ENCODE measurements at regions of chr9 and their contacts with region 1.

Region 1: DNA sequence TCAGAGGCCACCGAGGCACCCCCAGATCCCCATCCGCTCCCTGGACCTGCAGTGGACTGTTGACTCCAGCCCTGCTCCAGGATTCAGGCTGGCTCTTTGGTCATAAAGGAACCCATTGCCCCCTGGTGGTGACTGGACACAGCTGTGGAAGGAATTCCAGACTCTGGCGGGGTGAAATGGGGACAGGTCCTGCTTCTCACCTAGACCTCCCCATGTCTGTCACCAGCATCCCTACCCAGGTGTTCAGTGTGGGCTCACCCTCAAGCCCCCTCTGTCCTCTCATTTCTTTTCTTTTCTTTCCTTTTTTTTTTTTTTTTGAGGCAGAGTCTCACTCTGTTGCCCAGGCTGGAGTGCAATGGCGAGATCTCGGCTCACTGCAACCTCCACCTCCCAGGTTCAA is 25.5 kb upstream of the STXBP1 start:
- DNase-seq: peak; percentile 87 to 91 (median 90)
- ATAC-seq: peak; percentile 88
- H3K4me3 ChIP-seq: no peak overlapping the region
- H3K27ac ChIP-seq: no peak overlapping the region
- H3K4me1 ChIP-seq: peaks cover 8% of the 10 kb centered on the region
- H3K27me3 ChIP-seq: no peaks in the 10 kb centered on the region
- CTCF ChIP-seq: peak; percentile 62 to 96 (median 93)
- POLR2A ChIP-seq: peak in 1 of 3 donors; percentile 12

Region 2: GRCh38 chr9:127505481-127506173 is 80.9 kb before region 1 on chr9:
- intact Hi-C with region 1: loop called (anchors 5 kb)
- DNase-seq: no peak
- ATAC-seq: no peak
- H3K4me3 ChIP-seq: no peak overlapping the region
- H3K27ac ChIP-seq: peak overlapping the region in 2 of 4 donors; percentile 12 to 26
- H3K4me1 ChIP-seq: no peaks in the 10 kb centered on the region
- H3K27me3 ChIP-seq: no peaks in the 10 kb centered on the region
- CTCF ChIP-seq: peak in 6 of 7 experiments; percentile 10 to 32 (median 24)
- POLR2A ChIP-seq: no peak

Region 3: GRCh38 chr9:127525401-127526187 is 60.9 kb before region 1 on chr9:
- intact Hi-C with region 1: loop called (anchors 5 kb)
- DNase-seq: peak in 2 of 4 donors; percentile 30 to 53
- ATAC-seq: no peak
- H3K4me3 ChIP-seq: no peak overlapping the region
- H3K27ac ChIP-seq: peak overlapping the region in 1 of 4 donors; percentile 30
- H3K4me1 ChIP-seq: peaks cover 34% of the 10 kb centered on the region
- H3K27me3 ChIP-seq: no peaks in the 10 kb centered on the region
- CTCF ChIP-seq: peak; percentile 26 to 67 (median 53)
- POLR2A ChIP-seq: no peak

Region 4: DNA sequence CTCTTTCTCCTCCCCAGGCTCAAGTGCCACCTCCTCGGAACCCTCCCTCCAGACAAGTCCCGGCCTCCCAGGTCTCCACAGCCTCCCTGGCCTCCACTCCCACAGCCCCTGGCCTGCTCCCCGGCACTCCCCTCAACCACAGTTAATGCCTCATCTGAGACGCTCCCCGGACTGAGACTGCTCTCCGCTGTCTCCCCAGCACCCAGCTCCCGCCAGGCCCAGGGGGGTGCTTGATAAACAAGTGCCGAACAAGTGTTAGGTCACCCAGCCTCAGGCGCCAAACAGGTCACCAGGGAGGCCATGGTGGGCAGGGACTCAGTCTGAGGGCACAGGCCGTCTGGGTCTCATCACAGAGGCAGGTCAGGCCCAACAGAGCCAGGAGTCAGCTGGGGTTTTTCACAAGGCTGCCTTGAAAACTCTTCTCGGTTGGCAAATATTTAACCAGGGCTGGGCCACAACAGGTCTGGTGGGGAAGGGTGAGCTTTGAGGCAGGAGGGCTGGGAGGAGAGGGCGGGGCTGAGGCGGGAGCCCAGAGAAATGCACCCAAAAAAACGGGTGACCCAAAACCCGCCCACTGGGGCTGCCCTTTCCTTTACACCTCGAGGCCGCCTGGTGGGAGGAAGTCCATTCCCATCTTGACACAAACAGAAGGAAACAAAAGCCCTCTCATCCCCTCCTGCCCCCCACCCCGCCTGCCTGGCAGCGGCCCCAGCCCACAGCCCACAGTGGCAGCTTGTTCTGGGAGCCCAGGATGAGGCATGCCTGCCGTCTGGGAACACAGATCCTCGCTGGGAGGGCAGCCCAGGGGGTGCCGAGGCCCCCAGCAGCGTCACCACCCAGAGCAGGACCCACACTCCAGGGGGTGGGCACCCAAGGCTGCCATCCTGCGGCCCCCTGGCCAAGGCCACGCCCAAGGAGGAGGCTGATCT is 41.1 kb before region 1 on chr9:
- intact Hi-C with region 1: loop called (anchors 5 kb)
- DNase-seq: peak; percentile 97 to 99 (median 98)
- ATAC-seq: peak; percentile 87
- H3K4me3 ChIP-seq: no peak overlapping the region
- H3K27ac ChIP-seq: peak overlapping the region; percentile 90 to 99 (median 95)
- H3K4me1 ChIP-seq: peaks cover 97% of the 10 kb centered on the region
- H3K27me3 ChIP-seq: no peaks in the 10 kb centered on the region
- CTCF ChIP-seq: peak in 4 of 7 experiments; percentile 38 to 51 (median 44)
- POLR2A ChIP-seq: peak; percentile 46 to 82 (median 74)

Region 5: DNA sequence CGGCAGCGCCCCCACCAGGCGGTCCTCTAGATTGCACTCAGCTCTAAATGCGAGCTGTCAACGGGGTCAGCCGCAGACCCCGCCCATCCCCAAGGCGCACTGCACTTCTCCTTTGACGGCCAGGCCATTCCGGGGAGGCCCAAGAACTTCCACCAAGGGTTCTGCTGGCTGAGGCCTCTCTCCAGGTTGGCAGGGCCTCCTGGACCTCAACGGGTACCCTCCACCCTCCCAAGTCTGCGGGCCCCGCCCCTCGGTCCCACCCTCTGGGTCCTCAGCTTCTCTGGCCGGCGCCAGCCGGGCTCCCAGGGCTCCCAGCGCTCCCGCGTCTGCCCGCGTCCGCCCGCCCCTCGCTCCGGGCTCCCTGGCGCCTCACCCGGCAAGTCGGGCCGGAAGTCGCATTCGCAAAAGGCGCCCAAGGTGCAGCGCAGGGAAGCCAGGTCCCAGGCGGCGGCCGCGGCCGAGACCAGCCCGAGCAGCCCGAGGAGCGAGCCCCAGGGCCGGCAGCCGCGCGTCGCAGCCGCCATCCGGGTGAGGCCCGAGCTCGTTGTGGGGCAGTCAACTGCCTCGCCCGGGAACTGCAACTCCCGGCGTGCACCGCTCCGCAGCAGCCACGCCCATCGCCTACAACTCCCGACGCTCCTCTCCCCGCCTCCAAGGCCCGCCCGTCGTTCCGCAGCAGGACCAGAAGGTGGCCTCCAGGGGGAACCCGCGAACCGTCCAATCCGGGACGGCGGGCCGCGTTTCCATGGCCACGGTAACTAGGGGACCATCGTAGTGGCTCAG is 148.4 kb after region 1 on chr9 and contains the start of gene TOR2A:
- intact Hi-C with region 1: loop called (anchors 5 kb)
- DNase-seq: peak; percentile 97 to 98 (median 98)
- ATAC-seq: peak; percentile 95
- H3K4me3 ChIP-seq: peak within 1 kb of the TSS; percentile 63 to 70
- H3K27ac ChIP-seq: peak within 1 kb of the TSS; percentile 81 to 99 (median 93)
- H3K4me1 ChIP-seq: peaks cover 7% of the 10 kb centered on the region
- H3K27me3 ChIP-seq: no peaks in the 10 kb centered on the region
- CTCF ChIP-seq: peak; percentile 92 to 99 (median 99)
- POLR2A ChIP-seq: peak; percentile 77 to 80 (median 77)
- total RNA-seq, gene TOR2A: 8.3 to 14.2 TPM

Region 6: GRCh38 chr9:127869310-127870152 is 283.0 kb after region 1 on chr9:
- intact Hi-C with region 1: loop called (anchors 10 kb)
- DNase-seq: peak; percentile 88 to 90 (median 89)
- ATAC-seq: peak; percentile 84
- H3K4me3 ChIP-seq: no peak overlapping the region
- H3K27ac ChIP-seq: no peak overlapping the region
- H3K4me1 ChIP-seq: peaks cover 10% of the 10 kb centered on the region
- H3K27me3 ChIP-seq: no peaks in the 10 kb centered on the region
- CTCF ChIP-seq: peak; percentile 70 to 98 (median 92)
- POLR2A ChIP-seq: no peak

Region 7: GRCh38 chr9:127921557-127922120 is 335.1 kb after region 1 on chr9:
- intact Hi-C with region 1: loop called (anchors 5 kb)
- DNase-seq: peak; percentile 66 to 79 (median 76)
- ATAC-seq: peak; percentile 27
- H3K4me3 ChIP-seq: no peak overlapping the region
- H3K27ac ChIP-seq: no peak overlapping the region
- H3K4me1 ChIP-seq: peaks cover 41% of the 10 kb centered on the region
- H3K27me3 ChIP-seq: no peaks in the 10 kb centered on the region
- CTCF ChIP-seq: peak; percentile 93 to 96 (median 94)
- POLR2A ChIP-seq: no peak